ENCODE measurements at regions of chr1 and their contacts with region 1.

Region 1: DNA sequence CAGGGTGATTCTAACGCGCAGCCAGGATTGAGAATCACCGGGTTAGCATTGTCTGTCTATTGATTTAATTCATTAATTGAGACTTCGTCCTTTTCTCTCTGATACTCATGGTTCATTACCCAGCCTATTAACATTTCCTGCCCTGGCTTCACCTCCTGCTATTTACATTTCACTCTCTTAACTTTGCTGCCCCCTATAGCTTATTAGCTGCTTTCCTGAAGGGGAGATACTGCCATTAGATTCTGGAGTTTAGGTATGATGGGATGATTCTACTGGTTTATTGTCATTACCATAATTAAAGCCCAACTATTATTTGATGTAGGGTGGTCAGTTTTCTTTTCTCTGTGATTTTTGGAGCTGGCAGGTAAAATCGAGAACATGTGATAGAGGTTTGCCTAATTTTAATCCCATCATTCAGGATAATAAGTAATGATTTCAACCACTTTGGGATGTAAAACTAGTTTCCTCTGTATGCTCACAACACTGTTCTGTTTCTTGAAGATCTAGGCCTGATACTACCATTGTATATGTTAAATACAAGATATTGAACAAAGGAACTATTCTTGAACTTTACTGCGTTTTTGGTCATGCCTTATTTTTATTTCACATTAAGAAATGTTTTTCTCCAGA is 6.4 kb downstream of the PPP2R5A start:
- DNase-seq: peak; percentile 36
- H3K4me3 Mint-ChIP-seq: peak overlapping the region; percentile 15
- H3K27ac Mint-ChIP-seq: peak overlapping the region; percentile 60
- H3K4me1 Mint-ChIP-seq: peaks cover 63% of the 10 kb centered on the region
- H3K27me3 Mint-ChIP-seq: no peaks in the 10 kb centered on the region
- CTCF ChIP-seq: peak; percentile 66

Region 2: GRCh38 chr1:210607361-210607760 is 1684.3 kb before region 1 on chr1:
- CTCF ChIA-PET with region 1: no interaction called
- intact Hi-C with region 1: no loop called
- DNase-seq: no peak
- H3K4me3 Mint-ChIP-seq: no peak overlapping the region
- H3K27ac Mint-ChIP-seq: no peak overlapping the region
- H3K4me1 Mint-ChIP-seq: no peaks in the 10 kb centered on the region
- H3K27me3 Mint-ChIP-seq: no peaks in the 10 kb centered on the region
- CTCF ChIP-seq: no peak

Region 3: GRCh38 chr1:212089560-212090163 is 202.0 kb before region 1 on chr1:
- CTCF ChIA-PET with region 1: interaction called, 5 read pairs
- intact Hi-C with region 1: loop called (anchors 5 kb)
- DNase-seq: no peak
- H3K4me3 Mint-ChIP-seq: no peak overlapping the region
- H3K27ac Mint-ChIP-seq: no peak overlapping the region
- H3K4me1 Mint-ChIP-seq: peaks cover 22% of the 10 kb centered on the region
- H3K27me3 Mint-ChIP-seq: no peaks in the 10 kb centered on the region
- CTCF ChIP-seq: no peak

Region 4: GRCh38 chr1:212237651-212238050 is 54.0 kb before region 1 on chr1:
- CTCF ChIA-PET with region 1: interaction called, 6 read pairs
- intact Hi-C with region 1: loop called (anchors 1 kb)
- DNase-seq: peak; percentile 60
- H3K4me3 Mint-ChIP-seq: no peak overlapping the region
- H3K27ac Mint-ChIP-seq: peak overlapping the region; percentile 86
- H3K4me1 Mint-ChIP-seq: peaks cover 54% of the 10 kb centered on the region
- H3K27me3 Mint-ChIP-seq: no peaks in the 10 kb centered on the region
- CTCF ChIP-seq: no peak

Region 5: GRCh38 chr1:212353181-212353580 is 61.6 kb after region 1 on chr1:
- CTCF ChIA-PET with region 1: no interaction called
- intact Hi-C with region 1: no loop called
- DNase-seq: no peak
- H3K4me3 Mint-ChIP-seq: no peak overlapping the region
- H3K27ac Mint-ChIP-seq: no peak overlapping the region
- H3K4me1 Mint-ChIP-seq: no peaks in the 10 kb centered on the region
- H3K27me3 Mint-ChIP-seq: no peaks in the 10 kb centered on the region
- CTCF ChIP-seq: no peak

Region 6: DNA sequence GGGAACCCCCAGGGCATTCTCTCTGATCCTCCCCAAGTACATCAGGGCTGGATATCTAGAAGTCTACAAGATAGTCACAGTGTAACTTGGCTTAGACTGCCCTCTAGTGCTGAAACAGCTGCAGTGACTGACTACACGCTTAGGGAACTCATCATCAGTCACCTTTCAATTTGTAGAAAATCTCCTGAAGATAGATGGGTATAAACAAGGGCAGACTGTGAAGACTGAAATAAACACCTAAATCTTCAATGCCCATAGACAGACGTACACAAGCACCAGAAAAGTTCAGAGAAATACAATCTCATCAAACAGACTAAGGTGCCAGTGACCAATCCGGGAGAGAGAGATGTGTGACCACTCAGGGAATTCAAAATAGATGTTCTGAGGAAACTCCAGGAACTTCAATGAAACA is 76.5 kb after region 1 on chr1:
- CTCF ChIA-PET with region 1: no interaction called
- intact Hi-C with region 1: loop called (anchors 5 kb)
- DNase-seq: peak; percentile 66
- H3K4me3 Mint-ChIP-seq: no peak overlapping the region
- H3K27ac Mint-ChIP-seq: no peak overlapping the region
- H3K4me1 Mint-ChIP-seq: no peaks in the 10 kb centered on the region
- H3K27me3 Mint-ChIP-seq: no peaks in the 10 kb centered on the region
- CTCF ChIP-seq: peak; percentile 86

Region 7: GRCh38 chr1:212655668-212656423 is 364.2 kb after region 1 on chr1:
- CTCF ChIA-PET with region 1: no interaction called
- intact Hi-C with region 1: no loop called
- DNase-seq: peak; percentile 38
- H3K4me3 Mint-ChIP-seq: no peak overlapping the region
- H3K27ac Mint-ChIP-seq: no peak overlapping the region
- H3K4me1 Mint-ChIP-seq: no peaks in the 10 kb centered on the region
- H3K27me3 Mint-ChIP-seq: peaks cover 65% of the 10 kb centered on the region
- CTCF ChIP-seq: no peak

Measured in Calu3 (cell line).